ENCODE measurements at regions of chr20 and their contacts with region 1.

Region 1: GRCh38 chr20:4014031-4014474 is 1.3 kb downstream of the RNF24 start:
- DNase-seq: peak; percentile 82
- H3K4me3 Mint-ChIP-seq: peak overlapping the region; percentile 77
- H3K27ac Mint-ChIP-seq: peak overlapping the region; percentile 68
- H3K4me1 Mint-ChIP-seq: peaks cover 46% of the 10 kb centered on the region
- H3K27me3 Mint-ChIP-seq: no peaks in the 10 kb centered on the region

Region 2: DNA sequence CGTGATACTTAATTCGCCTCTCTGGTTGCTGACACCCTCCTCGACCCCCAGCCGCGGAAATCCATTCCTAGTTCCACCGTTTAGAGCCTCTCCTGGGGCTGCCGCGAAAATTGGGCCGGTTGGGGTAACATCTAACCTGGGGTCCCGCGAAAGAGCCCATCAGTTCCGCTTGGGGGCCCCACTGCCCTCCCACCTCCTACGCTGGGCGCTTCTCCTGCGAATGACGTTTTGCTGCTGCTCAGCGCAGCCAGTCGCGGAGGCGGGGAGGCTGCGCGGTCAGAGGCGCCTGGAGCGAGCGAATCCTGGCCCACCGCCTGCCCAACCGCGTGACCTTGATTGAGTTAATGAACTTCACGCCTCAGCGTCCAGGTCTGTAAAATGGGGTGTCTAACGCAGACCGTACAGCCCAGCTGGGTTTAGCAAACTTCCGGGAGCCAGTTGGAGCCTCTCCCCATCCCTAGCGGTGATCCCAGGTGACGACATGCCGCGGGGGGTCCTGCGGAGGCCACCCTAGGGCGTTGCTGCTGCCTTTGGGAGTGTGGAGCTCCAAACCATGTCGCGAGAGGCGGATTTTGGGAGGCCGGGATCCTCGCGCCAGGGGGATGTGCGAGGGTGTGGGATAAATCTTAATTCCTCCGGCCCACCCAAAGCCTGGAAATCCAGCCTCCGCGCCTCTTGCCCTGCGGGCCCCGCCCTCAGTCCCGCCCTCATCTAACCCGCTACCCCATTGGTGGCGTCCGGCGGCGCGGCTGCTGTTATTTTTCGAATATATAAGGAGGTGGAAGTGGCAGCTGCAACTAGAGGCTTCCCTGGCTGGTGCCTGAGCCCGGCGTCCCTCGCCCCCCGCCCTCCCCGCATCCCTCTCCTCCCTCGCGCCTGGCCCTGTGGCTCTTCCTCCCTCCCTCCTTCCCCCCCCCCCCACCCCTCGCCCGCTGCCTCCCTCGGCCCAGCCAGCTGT is 218.3 kb before region 1 on chr20 and contains the start of gene CDC25B:
- intact Hi-C with region 1: loop called (anchors 5 kb)
- DNase-seq: peak; percentile 96
- H3K4me3 Mint-ChIP-seq: peak within 1 kb of the TSS; percentile 97
- H3K27ac Mint-ChIP-seq: peak within 1 kb of the TSS; percentile 96
- H3K4me1 Mint-ChIP-seq: peaks cover 44% of the 10 kb centered on the region
- H3K27me3 Mint-ChIP-seq: no peaks in the 10 kb centered on the region
- total RNA-seq, gene CDC25B: 70.7 and 75.5 TPM in 2 replicates

Region 3: GRCh38 chr20:3888622-3889488 is 125.2 kb before region 1 on chr20 and contains the start of gene PANK2:
- intact Hi-C with region 1: loop called (anchors 1 kb)
- DNase-seq: peak; percentile 100
- H3K4me3 Mint-ChIP-seq: peak within 1 kb of the TSS; percentile 100
- H3K27ac Mint-ChIP-seq: peak within 1 kb of the TSS; percentile 99
- H3K4me1 Mint-ChIP-seq: peaks cover 45% of the 10 kb centered on the region
- H3K27me3 Mint-ChIP-seq: no peaks in the 10 kb centered on the region
- total RNA-seq, gene PANK2: 45.4 and 52.2 TPM in 2 replicates

Region 4: DNA sequence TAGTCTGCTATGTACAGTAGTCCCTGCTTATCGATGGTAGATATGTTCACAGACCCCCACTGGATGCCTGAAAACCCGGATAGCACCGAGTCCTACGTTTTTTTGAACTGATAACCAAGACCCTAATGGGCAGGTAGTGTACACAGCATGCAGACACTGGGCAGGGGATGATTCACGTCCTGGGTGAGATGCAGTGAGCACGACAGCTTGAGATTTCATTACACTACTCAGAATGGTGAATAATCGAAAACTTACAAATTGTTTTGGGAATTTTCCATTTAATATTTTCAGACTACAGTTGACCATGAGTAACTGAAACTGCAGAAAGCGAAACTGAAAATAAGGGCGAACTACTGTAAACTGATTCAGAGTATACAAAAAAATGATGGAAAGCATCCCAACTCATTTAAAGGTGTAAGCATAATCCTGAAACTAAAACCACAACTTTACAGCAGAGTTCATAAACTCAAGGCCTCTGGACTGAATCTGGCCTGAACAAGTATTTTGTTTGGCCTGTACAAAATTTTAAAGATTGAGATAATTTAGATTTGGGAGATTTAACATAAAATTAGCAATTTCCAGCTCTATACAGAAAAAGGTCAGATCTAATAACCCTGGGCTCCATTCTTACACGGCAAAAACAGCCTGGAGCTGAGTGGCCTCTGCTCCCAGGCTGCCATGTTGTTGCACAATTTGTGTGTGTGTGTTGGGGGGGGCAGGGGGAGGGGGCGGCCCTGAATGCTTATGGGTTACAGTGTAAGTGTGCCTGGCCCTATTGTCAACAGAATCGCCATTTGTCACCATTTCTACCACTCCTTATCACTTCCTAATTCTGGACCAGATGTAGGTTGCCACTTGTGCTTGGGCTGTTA is 33.6 kb before region 1 on chr20:
- intact Hi-C with region 1: loop called (anchors 1 kb)
- DNase-seq: peak; percentile 71
- H3K4me3 Mint-ChIP-seq: peak overlapping the region; percentile 80
- H3K27ac Mint-ChIP-seq: peak overlapping the region; percentile 86
- H3K4me1 Mint-ChIP-seq: peaks cover 16% of the 10 kb centered on the region
- H3K27me3 Mint-ChIP-seq: no peaks in the 10 kb centered on the region

Region 5: DNA sequence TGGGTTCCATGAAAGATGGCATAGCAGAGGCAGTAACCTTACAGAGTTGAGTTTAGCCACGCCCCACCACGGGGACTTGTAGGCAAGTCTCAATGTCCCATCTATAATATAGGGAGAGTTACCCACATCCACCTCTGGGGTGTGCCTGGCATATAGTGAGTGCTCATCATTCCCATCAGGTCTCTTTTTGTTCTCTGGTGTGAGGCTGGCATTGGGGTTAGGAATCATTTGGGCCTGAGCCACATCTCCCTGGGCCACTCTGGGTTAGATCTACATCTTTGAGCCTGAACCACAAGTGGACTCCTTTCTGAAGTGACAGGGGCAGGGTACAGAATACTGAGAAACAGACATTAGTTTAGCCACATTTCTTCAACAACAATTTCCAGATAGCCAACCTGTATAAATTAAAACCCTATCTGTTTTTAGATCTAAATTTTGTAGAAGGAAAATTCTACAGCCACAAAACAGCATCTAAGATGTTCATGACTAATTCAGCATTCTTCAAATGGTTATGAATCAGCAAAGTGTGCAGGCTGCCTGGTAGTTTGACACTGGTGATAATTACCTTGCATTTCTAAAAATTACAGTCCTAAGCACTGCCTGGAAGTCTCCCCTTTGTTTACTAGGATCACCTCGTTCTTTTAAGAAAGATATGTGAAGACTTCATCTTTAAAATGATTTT is 18.8 kb before region 1 on chr20:
- intact Hi-C with region 1: loop called (anchors 2 kb)
- DNase-seq: peak; percentile 67
- H3K4me3 Mint-ChIP-seq: peak overlapping the region; percentile 41
- H3K27ac Mint-ChIP-seq: peak overlapping the region; percentile 76
- H3K4me1 Mint-ChIP-seq: peaks cover 37% of the 10 kb centered on the region
- H3K27me3 Mint-ChIP-seq: no peaks in the 10 kb centered on the region

Region 6: GRCh38 chr20:4091490-4092479 is 77.7 kb after region 1 on chr20:
- intact Hi-C with region 1: loop called (anchors 2 kb)
- DNase-seq: peak; percentile 87
- H3K4me3 Mint-ChIP-seq: no peak overlapping the region
- H3K27ac Mint-ChIP-seq: peak overlapping the region; percentile 2
- H3K4me1 Mint-ChIP-seq: peaks cover 5% of the 10 kb centered on the region
- H3K27me3 Mint-ChIP-seq: peaks cover 17% of the 10 kb centered on the region

Measured in activated CD4-positive, alpha-beta T cell treated with anti-CD3 and anti-CD28 coated beads, Interleukin-2, amount 10 ng/mL, durations not matched to agents 24 days and 14 days (primary cell).